ENCODE measurements at regions of chr5 and their contacts with region 1.

Region 1: DNA sequence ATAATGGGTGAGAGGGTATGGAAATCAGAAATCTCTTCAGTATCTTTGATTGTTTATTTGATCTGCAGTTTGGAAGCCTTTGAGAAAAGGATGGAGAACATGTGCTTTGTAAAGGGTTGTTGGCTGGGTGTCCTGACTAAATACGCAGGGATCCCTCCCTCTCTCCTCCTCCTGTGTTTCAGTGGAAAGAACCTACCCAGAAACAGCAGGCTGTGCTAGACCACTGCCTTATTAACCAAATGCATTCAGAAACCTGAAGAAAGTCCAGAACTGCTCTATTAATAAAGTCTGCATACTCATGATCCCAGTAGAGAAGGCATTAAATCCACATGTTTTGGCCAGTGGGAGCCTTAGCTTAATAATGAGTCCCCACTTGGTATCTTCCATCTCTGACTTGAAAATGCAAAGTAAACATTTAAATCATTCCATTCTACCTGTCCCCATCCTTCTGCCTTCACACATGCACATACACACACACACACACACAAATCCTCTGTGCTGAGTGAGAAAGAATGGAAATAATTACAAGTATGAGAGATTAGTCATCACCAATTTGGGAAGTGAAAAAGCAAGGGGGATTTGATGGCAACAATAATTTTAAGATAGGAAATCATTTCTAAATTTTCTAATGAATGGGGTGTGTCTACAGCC is 10.0 kb upstream of the LECT2 start:
- DNase-seq: no peak
- ATAC-seq: no peak
- H3K4me3 ChIP-seq: no peak overlapping the region
- H3K27ac ChIP-seq: peak overlapping the region in 1 of 2 experiments; percentile 48; a peak in 2 of 6 replicates
- H3K4me1 ChIP-seq: peaks cover 6% of the 10 kb centered on the region; the same call in 1 of the 3 replicates
- CTCF ChIP-seq: no peak
- EP300 ChIP-seq: no peak
- POLR2A ChIP-seq: no peak
- RAD21 ChIP-seq: no peak

Region 2: GRCh38 chr5:135950611-135951010 is 14.2 kb before region 1 on chr5:
- CTCF ChIA-PET with region 1: interaction called, 30 read pairs
- POLR2A ChIA-PET with region 1: no interaction called
- DNase-seq: no peak
- ATAC-seq: no peak
- H3K4me3 ChIP-seq: no peak overlapping the region
- H3K27ac ChIP-seq: no peak overlapping the region
- H3K4me1 ChIP-seq: peaks cover 1% of the 10 kb centered on the region
- CTCF ChIP-seq: no peak
- EP300 ChIP-seq: no peak
- POLR2A ChIP-seq: no peak
- RAD21 ChIP-seq: no peak

Region 3: DNA sequence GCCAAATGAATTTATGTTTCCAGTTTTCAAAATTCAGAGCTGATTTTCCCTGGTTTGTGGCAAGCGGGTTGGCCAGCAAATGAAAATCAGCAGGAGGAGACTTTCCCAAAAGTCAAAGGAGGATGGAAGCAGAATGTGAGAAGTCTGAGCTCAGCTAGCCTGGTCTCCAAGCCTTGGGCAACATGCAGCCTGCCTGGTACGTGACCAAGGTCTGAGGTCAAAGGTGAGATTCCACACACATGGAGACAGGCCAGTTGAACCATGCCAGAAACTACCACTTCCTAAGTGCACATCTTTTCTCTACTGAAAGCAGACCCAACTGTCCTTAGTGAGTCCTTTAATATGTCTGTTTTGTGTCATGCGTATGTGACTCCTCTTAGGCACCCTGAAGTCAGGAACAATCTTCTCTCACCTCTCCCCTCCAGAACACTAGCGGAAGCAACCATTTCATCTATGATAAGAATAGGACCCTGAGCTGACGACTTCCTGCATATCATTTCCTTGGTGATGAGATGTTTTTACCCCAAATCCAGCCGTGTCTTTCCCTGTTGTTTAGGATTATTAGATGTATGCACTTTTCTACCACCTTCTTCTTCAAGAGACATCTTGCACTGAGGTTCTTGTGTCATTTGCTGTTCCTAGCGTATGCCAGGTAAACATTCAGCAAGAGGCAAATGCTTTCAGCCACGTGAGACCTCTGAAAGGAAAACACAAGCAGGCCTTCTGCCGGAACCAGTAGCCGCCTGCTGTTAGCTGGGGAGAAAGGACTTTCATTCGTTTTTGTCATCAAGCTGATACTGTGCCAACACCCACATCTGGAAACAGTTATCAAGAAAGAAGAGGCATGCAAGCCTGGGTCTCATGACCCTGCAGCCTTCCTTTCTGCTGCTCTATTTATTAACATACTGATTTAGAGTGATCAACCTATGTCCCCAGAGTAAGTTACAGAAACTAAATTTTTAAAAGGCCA is 54.3 kb after region 1 on chr5:
- CTCF ChIA-PET with region 1: no interaction called
- POLR2A ChIA-PET with region 1: no interaction called
- DNase-seq: peak in 1 of 2 experiments; percentile 80
- ATAC-seq: peak in 1 of 2 experiments; percentile 8; a peak in 2 of 6 replicates
- H3K4me3 ChIP-seq: no peak overlapping the region
- H3K27ac ChIP-seq: peak overlapping the region; percentile 96 to 97
- H3K4me1 ChIP-seq: peaks cover 71% of the 10 kb centered on the region
- CTCF ChIP-seq: no peak
- EP300 ChIP-seq: no peak
- POLR2A ChIP-seq: no peak
- RAD21 ChIP-seq: no peak; a peak in 1 of 5 replicates

Measured in A549 (cell line).